HepG2 (cell line): ENCODE measurements at regions of chr6 and their contacts with region 1.

Region 1: GRCh38 chr6:126361832-126362412 is 22.0 kb downstream of the CENPW start:
- DNase-seq: no peak
- ATAC-seq: peak; percentile 50; the same call in 2 of the 3 replicates
- H3K4me3 ChIP-seq: no peak overlapping the region
- H3K27ac ChIP-seq: no peak overlapping the region
- H3K4me1 ChIP-seq: no peaks in the 10 kb centered on the region
- H3K27me3 ChIP-seq: no peaks in the 10 kb centered on the region
- CTCF ChIP-seq: no peak
- EP300 ChIP-seq: no peak
- POLR2A ChIP-seq: no peak
- RAD21 ChIP-seq: no peak

Region 2: DNA sequence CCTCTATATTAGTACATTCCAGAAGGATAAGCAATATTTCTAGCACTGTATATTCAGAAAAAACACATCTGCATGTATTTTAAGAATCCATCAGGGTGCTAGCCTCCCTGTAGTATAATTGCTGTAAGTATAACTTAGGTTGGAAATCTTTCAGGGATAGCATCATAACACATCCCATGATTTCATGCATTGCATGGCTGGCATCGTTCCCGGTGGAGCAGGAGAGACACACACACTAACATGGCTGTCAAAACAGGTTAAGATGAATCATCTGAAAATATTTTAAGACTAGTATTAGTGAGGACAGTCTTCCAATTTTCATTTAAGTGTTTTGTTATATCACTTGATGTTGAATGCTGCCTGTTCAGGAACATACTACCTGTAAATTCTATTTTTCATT is 54.1 kb before region 1 on chr6:
- CTCF ChIA-PET with region 1: no interaction called
- POLR2A ChIA-PET with region 1: no interaction called
- in situ Hi-C with region 1: no loop called
- intact Hi-C with region 1: no loop called
- DNase-seq: no peak
- ATAC-seq: no peak
- H3K4me3 ChIP-seq: no peak overlapping the region
- H3K27ac ChIP-seq: no peak overlapping the region
- H3K4me1 ChIP-seq: no peaks in the 10 kb centered on the region
- H3K27me3 ChIP-seq: no peaks in the 10 kb centered on the region
- CTCF ChIP-seq: no peak
- EP300 ChIP-seq: no peak
- POLR2A ChIP-seq: no peak
- RAD21 ChIP-seq: no peak

Region 3: GRCh38 chr6:126318793-126319192 is 43.1 kb before region 1 on chr6:
- CTCF ChIA-PET with region 1: no interaction called
- POLR2A ChIA-PET with region 1: no interaction called
- in situ Hi-C with region 1: no loop called
- intact Hi-C with region 1: no loop called
- DNase-seq: no peak
- ATAC-seq: no peak
- H3K4me3 ChIP-seq: no peak overlapping the region
- H3K27ac ChIP-seq: no peak overlapping the region
- H3K4me1 ChIP-seq: no peaks in the 10 kb centered on the region
- H3K27me3 ChIP-seq: no peaks in the 10 kb centered on the region
- CTCF ChIP-seq: no peak
- EP300 ChIP-seq: no peak
- POLR2A ChIP-seq: no peak
- RAD21 ChIP-seq: no peak

Region 4: GRCh38 chr6:126422912-126423311 is 61.0 kb after region 1 on chr6:
- CTCF ChIA-PET with region 1: no interaction called
- POLR2A ChIA-PET with region 1: no interaction called
- in situ Hi-C with region 1: no loop called
- intact Hi-C with region 1: loop called (anchors 1 kb)
- DNase-seq: no peak
- ATAC-seq: no peak
- H3K4me3 ChIP-seq: no peak overlapping the region
- H3K27ac ChIP-seq: no peak overlapping the region
- H3K4me1 ChIP-seq: peaks cover 4% of the 10 kb centered on the region; the same call in 1 of the 2 replicates
- H3K27me3 ChIP-seq: no peaks in the 10 kb centered on the region
- CTCF ChIP-seq: no peak
- EP300 ChIP-seq: no peak
- POLR2A ChIP-seq: no peak
- RAD21 ChIP-seq: no peak

Region 5: DNA sequence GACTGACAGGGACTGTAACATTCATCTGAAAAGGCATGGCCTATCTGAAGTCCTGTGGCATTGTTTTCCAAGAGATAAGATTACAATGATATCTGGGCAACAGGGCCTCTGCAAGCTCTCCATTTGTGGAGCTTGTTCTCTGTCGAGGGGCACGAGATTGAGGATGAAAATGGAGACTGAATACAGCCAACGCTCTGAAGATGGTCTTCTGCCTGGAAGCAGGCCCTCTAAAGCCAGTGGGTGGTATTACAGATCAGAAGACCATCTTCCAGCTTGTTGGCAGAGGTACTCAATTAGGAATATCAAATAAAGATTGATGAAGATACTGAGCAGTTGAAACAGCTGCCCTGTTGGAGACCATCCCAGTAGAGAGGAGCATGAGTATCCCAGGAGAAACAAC is 266.2 kb after region 1 on chr6:
- CTCF ChIA-PET with region 1: no interaction called
- POLR2A ChIA-PET with region 1: no interaction called
- in situ Hi-C with region 1: no loop called
- intact Hi-C with region 1: loop called (anchors 1 kb)
- DNase-seq: no peak
- ATAC-seq: peak; percentile 63
- H3K4me3 ChIP-seq: no peak overlapping the region
- H3K27ac ChIP-seq: no peak overlapping the region
- H3K4me1 ChIP-seq: no peaks in the 10 kb centered on the region
- H3K27me3 ChIP-seq: no peaks in the 10 kb centered on the region
- CTCF ChIP-seq: peak; percentile 33; the same call in 1 of the 2 replicates
- EP300 ChIP-seq: no peak
- POLR2A ChIP-seq: no peak
- RAD21 ChIP-seq: no peak

Region 6: GRCh38 chr6:126657561-126658175 is 295.7 kb after region 1 on chr6:
- CTCF ChIA-PET with region 1: interaction called, 15 read pairs
- POLR2A ChIA-PET with region 1: no interaction called
- in situ Hi-C with region 1: loop called (anchors 25 kb)
- intact Hi-C with region 1: no loop called
- DNase-seq: peak; percentile 20
- ATAC-seq: peak; percentile 73
- H3K4me3 ChIP-seq: no peak overlapping the region
- H3K27ac ChIP-seq: no peak overlapping the region
- H3K4me1 ChIP-seq: no peaks in the 10 kb centered on the region
- H3K27me3 ChIP-seq: no peaks in the 10 kb centered on the region
- CTCF ChIP-seq: peak; percentile 65
- EP300 ChIP-seq: no peak
- POLR2A ChIP-seq: no peak
- RAD21 ChIP-seq: peak; percentile 41

Region 7: GRCh38 chr6:127120787-127121636 is 759.1 kb after region 1 on chr6:
- CTCF ChIA-PET with region 1: interaction called, 4 read pairs
- POLR2A ChIA-PET with region 1: no interaction called
- in situ Hi-C with region 1: loop called (anchors 25 kb)
- intact Hi-C with region 1: loop called (anchors 1 kb)
- DNase-seq: peak; percentile 63
- ATAC-seq: peak; percentile 86
- H3K4me3 ChIP-seq: no peak overlapping the region
- H3K27ac ChIP-seq: no peak overlapping the region
- H3K4me1 ChIP-seq: no peaks in the 10 kb centered on the region
- H3K27me3 ChIP-seq: peaks cover 14 to 43% of the 10 kb centered on the region in 2 experiments; a peak in 4 of 5 replicates
- CTCF ChIP-seq: peak; percentile 95
- EP300 ChIP-seq: no peak
- POLR2A ChIP-seq: no peak
- RAD21 ChIP-seq: peak; percentile 82